Right cardiac atrium (tissue), 5 donors: ENCODE measurements at regions of chr7 and their contacts with region 1.

Region 1: GRCh38 chr7:22726345-22727185 is 435 bp upstream of the IL6 start:
- DNase-seq: peak; percentile 47 to 76 (median 62)
- ATAC-seq: peak; percentile 79 to 86
- H3K4me3 ChIP-seq: peak overlapping the region; percentile 21
- H3K27ac ChIP-seq: peak overlapping the region; percentile 34
- H3K4me1 ChIP-seq: peaks cover 17% of the 10 kb centered on the region
- H3K27me3 ChIP-seq: no peaks in the 10 kb centered on the region

Region 2: GRCh38 chr7:22559829-22560489 is 166.6 kb before region 1 on chr7:
- intact Hi-C with region 1: loop called (anchors 5 to 10 kb)
- DNase-seq: peak; percentile 72 to 87 (median 76)
- ATAC-seq: peak; percentile 75 to 76
- H3K4me3 ChIP-seq: no peak overlapping the region
- H3K27ac ChIP-seq: no peak overlapping the region
- H3K4me1 ChIP-seq: peaks cover 12% of the 10 kb centered on the region
- H3K27me3 ChIP-seq: no peaks in the 10 kb centered on the region